ENCODE measurements at regions of chr2 and their contacts with region 1.

Region 1: DNA sequence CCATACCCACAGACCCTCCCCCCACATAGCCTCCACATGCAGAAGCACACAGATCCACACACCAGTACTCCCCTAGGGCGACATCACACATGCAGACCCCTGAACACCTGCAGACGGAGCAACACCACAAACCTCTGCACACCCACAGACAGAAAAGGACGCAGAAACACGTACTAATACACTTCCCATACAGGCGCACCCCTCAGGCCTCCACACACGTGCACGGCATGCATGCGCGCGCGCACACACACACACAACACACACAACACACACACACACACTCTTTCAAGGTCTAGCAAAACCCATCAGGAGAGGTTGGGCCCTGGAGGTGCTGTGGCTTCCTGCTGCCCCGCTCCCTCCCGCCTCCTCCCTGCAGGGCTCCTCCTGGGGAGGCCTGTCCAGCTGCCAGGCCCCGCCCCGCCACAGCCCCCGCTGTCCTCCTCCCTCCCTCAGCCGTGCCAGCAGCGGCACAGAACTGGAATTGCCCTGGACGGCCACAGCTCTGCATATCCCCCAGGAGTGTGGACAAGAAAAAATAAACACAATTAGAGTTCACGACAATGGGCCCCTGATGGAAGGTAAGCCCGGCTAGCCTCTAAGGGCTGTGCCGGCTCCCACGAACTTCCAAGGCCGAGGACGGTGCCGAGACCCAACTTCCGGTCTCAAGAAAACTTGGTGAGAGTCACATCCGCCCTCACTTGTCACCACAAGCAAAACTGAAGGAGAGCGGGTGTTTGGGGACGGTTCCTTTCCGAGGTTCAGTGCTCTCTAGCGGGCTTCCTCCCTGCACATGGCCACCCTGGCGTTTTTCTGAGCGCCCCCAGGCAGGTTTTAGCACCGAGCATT is 6.8 kb downstream of the ZFP36L2 start:
- DNase-seq: peak; percentile 89
- H3K4me3 Mint-ChIP-seq: peak overlapping the region; percentile 88
- H3K27ac Mint-ChIP-seq: peak overlapping the region; percentile 95
- H3K4me1 Mint-ChIP-seq: peaks cover 42% of the 10 kb centered on the region
- H3K27me3 Mint-ChIP-seq: no peaks in the 10 kb centered on the region

Region 2: GRCh38 chr2:43178602-43179542 is 40.7 kb before region 1 on chr2:
- CTCF ChIA-PET with region 1: interaction called, 269 read pairs
- POLR2A ChIA-PET with region 1: interaction called, 215 read pairs
- intact Hi-C with region 1: loop called (anchors 1 kb)
- DNase-seq: peak; percentile 61
- H3K4me3 Mint-ChIP-seq: peak overlapping the region; percentile 29
- H3K27ac Mint-ChIP-seq: peak overlapping the region; percentile 87
- H3K4me1 Mint-ChIP-seq: peaks cover 69% of the 10 kb centered on the region
- H3K27me3 Mint-ChIP-seq: no peaks in the 10 kb centered on the region

Region 3: GRCh38 chr2:43269074-43269572 is 49.5 kb after region 1 on chr2:
- CTCF ChIA-PET with region 1: no interaction called
- POLR2A ChIA-PET with region 1: no interaction called
- intact Hi-C with region 1: no loop called
- DNase-seq: no peak
- H3K4me3 Mint-ChIP-seq: no peak overlapping the region
- H3K27ac Mint-ChIP-seq: no peak overlapping the region
- H3K4me1 Mint-ChIP-seq: peaks cover 18% of the 10 kb centered on the region
- H3K27me3 Mint-ChIP-seq: no peaks in the 10 kb centered on the region

Measured in activated CD4-positive, alpha-beta memory T cell treated with anti-CD3 and anti-CD28 coated beads for 36 hours (primary cell).